Cardiac septum (tissue), 1 donor: ENCODE measurements at regions of chr11 and their contacts with region 1.

Region 1: DNA sequence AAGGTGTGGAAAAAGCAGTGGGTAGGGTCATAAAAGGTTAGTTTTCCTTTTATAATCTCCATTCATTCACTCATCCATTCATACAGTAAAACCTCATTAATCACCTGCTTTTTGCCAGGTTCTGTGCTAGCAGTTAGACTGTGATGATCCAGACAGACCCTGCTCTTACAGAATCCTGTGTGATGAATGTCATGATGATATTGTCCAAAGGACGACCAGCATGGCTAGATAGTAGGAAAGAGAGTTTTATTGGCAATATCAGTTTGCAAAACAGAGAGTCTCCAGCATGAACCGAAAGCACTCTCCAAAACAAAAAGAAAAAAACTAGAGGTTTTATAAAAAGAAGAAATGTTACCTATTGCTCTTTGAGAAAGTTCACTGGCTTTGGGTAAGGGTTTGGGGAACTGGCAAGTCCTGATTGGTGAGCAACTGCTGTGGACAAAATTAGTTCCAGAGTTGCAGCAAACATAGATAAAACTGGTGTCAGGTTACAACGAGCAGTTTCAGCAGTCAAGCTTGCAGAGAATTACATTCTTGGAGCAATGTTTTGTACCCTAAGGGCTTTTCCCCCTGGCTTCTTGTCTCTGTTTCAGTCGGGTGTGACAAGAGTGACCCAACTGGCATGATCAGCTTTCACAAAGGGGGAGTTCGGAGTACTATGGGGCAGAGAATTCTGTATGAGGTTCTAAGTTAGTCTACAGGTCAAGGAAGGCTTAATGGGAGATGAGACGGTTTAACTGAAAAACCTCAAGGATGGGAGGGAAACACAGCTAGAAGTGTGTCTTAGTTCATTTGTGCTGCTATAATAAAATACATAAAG is 58.3 kb downstream of the HSD17B12 start:
- DNase-seq: no peak

Region 2: GRCh38 chr11:43680521-43681400 is 58.0 kb before region 1 on chr11 and contains the start of gene HSD17B12:
- intact Hi-C with region 1: loop called (anchors 5 kb)
- DNase-seq: peak; percentile 100
- total RNA-seq, gene HSD17B12: 88.0 TPM